ENCODE measurements at regions of chr6 and their contacts with region 1.

Region 1: DNA sequence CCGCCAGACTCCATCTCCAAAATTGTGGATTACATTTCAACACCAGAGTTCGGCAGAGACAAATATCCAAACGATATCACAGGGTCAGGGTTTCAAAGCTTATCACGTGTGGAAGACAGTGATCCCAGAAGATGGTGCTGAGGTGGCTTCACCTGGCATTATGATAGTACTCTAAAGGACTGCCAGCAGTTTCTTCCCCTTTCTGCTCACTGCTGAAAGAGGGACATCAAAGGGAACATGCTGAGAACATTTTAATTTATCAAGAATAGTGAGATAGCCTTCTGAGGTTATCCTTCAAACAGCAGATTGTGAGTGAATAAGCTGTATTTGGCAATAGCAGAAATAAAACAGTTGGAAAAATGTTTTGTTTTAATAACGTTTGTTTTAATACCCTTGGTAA is 79.7 kb downstream of the FIG4 start:
- DNase-seq: no peak
- H3K4me3 ChIP-seq: no peak overlapping the region
- H3K27ac ChIP-seq: no peak overlapping the region
- H3K4me1 ChIP-seq: no peaks in the 10 kb centered on the region
- H3K27me3 ChIP-seq: no peaks in the 10 kb centered on the region
- CTCF ChIP-seq: no peak
- POLR2A ChIP-seq: no peak

Region 2: DNA sequence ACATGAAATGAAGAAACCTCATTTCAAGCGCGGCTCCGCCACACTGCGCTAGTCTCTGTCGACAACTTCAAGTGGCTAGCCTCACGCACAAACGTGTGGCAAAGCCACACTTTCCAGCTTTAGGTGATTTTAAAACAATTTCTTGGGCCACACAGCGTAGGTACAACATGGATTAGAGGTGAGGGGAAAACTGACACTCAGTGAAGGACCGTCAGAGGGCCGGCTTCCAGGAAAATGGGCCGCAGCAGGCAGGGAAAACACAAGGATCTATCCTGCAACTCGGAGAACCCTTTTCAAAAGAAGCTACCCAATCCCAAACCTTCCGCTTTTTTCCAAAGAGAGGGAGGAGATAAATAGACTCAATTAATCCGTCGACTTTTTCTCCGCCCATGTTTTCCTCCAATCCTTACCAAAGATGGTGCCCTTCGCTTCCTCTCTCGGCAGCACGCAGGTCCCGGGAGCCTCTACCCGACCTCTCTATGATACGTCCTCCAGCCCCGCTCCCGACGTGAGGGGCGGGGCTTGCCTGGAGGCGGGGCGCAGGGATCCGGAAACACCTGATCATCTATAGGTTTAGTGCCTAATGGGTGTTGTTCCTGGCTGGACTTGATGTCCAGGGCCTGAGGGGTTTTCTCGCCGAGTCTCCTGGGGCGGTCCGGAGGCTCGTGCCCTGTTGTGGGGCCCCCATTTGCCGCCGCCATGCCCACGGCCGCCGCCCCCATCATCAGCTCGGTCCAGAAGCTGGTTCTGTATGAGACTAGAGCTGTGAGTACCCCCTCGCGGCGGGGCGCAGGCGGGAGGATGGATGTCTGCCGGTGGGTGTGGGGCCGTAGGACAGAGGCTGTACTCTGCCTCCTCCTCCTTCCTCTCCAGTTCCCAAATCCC is 79.8 kb before region 1 on chr6 and contains the starts of genes AK9 and FIG4:
- intact Hi-C with region 1: no loop called
- DNase-seq: peak; percentile 91 to 92
- H3K4me3 ChIP-seq: peak within 1 kb of the TSS; percentile 78 to 89 (median 81)
- H3K27ac ChIP-seq: peak within 1 kb of the TSS; percentile 87 to 94
- H3K4me1 ChIP-seq: no peaks in the 10 kb centered on the region
- H3K27me3 ChIP-seq: no peaks in the 10 kb centered on the region
- CTCF ChIP-seq: no peak
- POLR2A ChIP-seq: no peak
- total RNA-seq, gene AK9: 8.8 to 23.9 (median 20.0) TPM
- total RNA-seq, gene FIG4: 18.2 to 29.6 (median 18.4) TPM

Region 3: DNA sequence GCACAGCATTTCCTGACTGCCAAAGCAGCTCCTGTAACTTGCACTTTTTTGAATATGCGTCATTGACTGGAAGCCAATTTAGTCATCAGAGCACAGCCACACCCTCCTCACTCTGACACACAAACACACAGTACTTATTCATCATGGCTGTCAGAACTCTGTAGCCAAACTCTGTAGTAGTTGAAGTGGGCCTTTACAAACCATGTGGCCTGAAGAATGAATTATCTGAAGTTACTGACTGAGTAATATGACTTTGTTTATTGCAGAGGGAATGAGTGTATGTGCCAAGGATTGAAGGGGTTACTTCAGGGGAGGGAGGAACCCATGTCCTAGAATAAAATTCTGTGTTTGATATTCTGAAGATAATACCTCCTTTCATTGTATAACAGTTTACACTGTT is 23.0 kb after region 1 on chr6:
- intact Hi-C with region 1: loop called (anchors 1 kb)
- DNase-seq: no peak
- H3K4me3 ChIP-seq: no peak overlapping the region
- H3K27ac ChIP-seq: peak overlapping the region; percentile 63 to 77
- H3K4me1 ChIP-seq: peaks cover 0 to 5% of the 10 kb centered on the region in 2 donors
- H3K27me3 ChIP-seq: no peaks in the 10 kb centered on the region
- CTCF ChIP-seq: no peak
- POLR2A ChIP-seq: no peak